Transverse colon (tissue), 4 donors: ENCODE measurements at regions of chr3 and their contacts with region 1.

Region 1: DNA sequence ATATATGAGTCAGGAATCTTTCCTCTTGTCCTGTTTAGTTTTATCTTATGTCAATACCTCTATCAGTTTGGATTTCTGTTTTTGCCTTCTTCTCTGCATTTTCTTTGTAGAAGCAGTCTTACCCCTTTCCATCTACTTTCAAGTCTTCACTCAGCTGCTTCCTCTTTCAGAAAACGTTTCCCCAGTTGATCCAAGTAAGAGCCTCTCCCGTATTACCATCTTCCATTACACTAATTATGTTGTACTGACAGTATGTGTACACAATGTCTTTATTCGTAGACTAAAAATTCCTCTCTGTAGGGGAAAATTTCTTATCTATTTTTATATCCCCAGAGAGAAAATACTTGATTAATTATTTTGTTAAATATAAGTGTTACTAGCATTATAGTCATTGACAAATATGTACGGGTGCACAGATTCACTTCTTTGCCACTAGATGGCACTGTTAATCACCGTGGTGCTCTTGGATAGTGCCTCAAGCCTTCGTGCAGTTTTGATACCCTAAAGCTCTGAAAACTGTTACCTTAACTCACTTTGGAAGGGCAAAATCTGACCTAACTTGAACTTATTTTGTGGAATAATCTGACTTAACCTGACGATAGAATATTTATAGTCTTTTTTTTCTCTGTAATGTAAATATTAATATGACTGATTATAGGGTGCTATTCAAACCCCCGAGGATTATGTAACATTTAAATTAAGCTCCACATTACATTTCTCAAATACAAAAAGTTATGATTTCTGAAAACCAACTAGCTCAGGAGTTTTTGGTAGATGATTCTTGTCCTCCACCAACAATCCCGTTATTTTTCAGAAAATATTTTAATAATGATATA is 74.2 kb upstream of the POU1F1 start:
- DNase-seq: no peak
- H3K4me3 ChIP-seq: no peak overlapping the region
- H3K27ac ChIP-seq: no peak overlapping the region
- H3K4me1 ChIP-seq: peaks cover 0 to 26% (median 2%) of the 10 kb centered on the region in 4 donors
- H3K27me3 ChIP-seq: no peaks in the 10 kb centered on the region
- CTCF ChIP-seq: peak; percentile 71 to 94 (median 86)
- EP300 ChIP-seq: no peak
- POLR2A ChIP-seq: no peak

Region 2: DNA sequence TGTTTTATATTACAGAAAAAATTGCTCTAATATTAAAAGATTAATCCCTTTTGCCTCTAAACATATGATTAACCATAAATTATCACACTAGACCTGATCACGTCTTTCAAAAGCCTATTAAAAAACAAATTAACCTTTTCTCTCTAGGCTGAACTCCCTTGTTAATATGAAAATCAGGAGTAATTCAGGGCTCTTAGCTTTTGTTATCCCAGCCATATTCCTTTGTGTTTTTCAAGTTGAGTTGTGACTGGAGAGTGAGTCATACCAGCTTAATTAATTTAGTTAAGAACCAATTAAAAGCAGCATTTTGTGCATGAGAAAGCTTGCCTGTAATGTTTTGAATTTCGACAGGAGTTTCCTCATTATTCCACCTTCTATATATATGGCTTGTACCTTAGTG is 745.4 kb before region 1 on chr3:
- in situ Hi-C with region 1: no loop called
- intact Hi-C with region 1: no loop called
- DNase-seq: no peak
- H3K4me3 ChIP-seq: no peak overlapping the region
- H3K27ac ChIP-seq: no peak overlapping the region
- H3K4me1 ChIP-seq: no peaks in the 10 kb centered on the region
- H3K27me3 ChIP-seq: no peaks in the 10 kb centered on the region
- CTCF ChIP-seq: no peak
- EP300 ChIP-seq: no peak
- POLR2A ChIP-seq: no peak

Region 3: DNA sequence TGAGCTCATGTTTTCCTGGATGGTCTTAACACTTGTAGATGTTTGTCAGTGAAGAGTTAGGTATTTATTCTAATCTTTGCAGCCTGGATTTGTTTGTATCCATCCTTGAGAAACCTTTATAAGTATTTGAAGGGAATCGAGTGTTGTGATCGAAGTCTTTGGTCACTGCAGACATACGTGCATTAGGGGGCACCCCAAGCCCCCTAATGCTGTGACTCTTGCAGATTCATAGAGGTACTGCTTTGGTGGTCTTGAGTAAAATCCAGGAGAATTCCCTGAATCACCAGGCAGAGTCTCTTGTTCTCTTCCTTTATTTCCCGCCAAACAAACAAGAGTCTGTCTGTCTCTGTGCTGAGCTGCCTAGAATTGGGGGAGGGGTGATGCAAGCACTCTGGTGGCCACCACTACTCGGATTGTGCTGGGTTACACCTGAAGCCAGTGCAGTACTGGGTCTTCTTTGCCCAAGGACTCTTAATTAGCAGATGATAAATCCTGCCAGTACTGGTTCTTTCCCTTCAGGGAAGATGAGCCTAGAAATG is 96.3 kb after region 1 on chr3:
- in situ Hi-C with region 1: no loop called
- intact Hi-C with region 1: no loop called
- DNase-seq: no peak
- H3K4me3 ChIP-seq: no peak overlapping the region
- H3K27ac ChIP-seq: no peak overlapping the region
- H3K4me1 ChIP-seq: no peaks in the 10 kb centered on the region
- H3K27me3 ChIP-seq: no peaks in the 10 kb centered on the region
- CTCF ChIP-seq: no peak
- EP300 ChIP-seq: no peak
- POLR2A ChIP-seq: no peak

Region 4: DNA sequence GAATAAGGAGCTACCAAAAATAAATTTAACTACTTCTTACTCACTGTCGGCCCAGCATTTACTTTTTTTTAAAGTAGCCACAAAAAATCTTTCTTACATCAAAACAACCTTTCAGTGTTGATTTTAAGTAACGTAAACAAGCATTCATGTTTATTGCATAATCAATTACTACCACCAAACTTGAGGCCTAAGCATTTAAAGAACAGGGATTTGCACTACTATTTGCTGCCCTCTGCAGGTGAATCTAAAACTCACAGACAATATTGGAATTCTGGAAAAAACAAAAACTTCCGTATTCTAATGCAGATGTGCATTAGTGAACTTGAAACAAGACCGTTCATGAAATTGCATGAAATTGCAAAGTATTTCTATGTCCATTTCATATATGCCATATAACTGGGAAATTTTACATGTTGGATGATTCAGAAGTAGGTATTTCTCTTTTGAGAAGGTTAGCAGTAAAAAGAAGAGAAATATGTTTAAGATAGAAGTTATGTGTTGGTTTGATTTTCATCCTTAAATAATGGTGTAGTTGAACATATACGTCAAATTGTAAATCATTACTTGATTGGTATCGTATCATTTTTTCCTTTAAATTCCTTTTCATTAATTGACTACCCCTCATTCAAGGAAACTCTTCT is 652.7 kb after region 1 on chr3:
- in situ Hi-C with region 1: loop called in 1 of 4 experiments (anchors 10 kb)
- intact Hi-C with region 1: no loop called
- DNase-seq: no peak
- H3K4me3 ChIP-seq: no peak overlapping the region
- H3K27ac ChIP-seq: no peak overlapping the region
- H3K4me1 ChIP-seq: no peaks in the 10 kb centered on the region
- H3K27me3 ChIP-seq: no peaks in the 10 kb centered on the region
- CTCF ChIP-seq: peak; percentile 65 to 80 (median 70)
- EP300 ChIP-seq: no peak
- POLR2A ChIP-seq: no peak

Region 5: DNA sequence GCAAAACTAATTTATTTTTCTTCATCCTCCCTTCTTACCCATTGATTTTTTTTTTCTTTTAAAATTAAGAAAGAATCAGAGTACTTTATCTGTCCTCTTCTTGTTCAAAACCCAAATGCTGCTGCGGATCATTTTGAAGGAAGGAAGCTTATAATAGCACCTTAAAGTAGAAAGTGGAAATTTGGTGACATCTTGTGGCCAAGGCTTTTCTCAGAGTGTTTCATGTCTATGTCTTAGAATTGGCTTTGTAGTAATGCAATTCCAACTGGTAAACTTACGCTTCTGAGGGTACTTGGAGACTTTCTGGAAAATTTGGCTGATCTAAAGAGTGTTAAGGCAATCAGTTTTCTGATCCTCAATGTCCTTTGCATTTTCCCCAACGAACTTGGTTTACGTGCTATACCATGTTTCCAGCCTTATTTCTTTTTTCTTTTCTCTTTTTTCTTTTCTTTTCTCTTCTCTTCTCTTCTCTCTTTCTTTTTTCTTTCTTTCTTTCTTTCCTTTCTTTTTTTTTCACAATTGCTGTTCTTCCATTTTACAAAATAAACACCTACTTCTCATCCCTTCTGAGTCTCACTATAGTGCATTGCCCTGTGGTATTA is 829.9 kb after region 1 on chr3:
- in situ Hi-C with region 1: no loop called
- intact Hi-C with region 1: loop called (anchors 5 kb)
- DNase-seq: no peak
- H3K4me3 ChIP-seq: no peak overlapping the region
- H3K27ac ChIP-seq: no peak overlapping the region
- H3K4me1 ChIP-seq: no peaks in the 10 kb centered on the region
- H3K27me3 ChIP-seq: no peaks in the 10 kb centered on the region
- CTCF ChIP-seq: no peak
- EP300 ChIP-seq: no peak
- POLR2A ChIP-seq: no peak